OCI-LY7 (cell line): ENCODE measurements at regions of chr1 and their contacts with region 1.

Region 1: DNA sequence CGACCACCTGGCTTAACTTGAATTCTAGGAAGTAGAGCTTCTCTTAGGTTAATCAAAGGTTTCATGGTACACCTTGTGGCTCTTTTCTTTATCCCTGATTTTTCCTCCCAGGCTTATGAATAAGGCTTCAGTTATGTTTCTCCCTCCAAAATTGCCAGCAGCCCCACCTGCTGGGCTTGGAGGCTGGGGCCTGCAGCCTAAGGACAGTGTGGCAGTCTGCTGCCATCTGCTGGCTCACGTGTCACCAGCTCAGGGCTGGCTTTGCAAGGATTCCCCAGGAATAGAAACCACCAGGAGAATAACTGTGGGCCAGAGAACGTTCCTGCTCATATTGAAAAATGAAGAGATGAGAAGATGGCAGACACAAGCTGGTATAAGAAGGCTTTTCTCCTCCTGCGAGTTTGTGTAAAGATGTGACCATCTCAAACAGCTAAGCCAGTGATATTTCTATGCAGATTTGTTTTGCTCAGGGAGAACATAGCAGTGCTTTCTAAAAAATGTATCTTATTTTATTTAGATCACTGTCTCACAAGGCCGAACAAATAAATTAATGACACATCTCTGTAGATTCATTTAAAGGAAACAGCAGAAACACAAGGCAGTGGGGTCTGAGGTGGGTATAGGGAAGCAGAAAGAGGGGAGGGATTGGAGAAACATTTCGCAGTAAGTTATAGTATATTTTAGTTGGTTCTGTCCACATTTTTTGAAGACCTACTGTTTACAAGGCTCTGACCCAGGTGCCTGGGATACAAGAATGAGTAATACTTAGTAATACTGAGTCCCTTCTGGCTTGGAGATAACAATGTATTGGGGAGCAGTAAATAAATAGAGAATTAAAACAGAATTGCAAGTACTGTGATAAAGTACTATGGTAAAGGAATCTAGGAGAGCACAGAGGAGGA is 291.1 kb upstream of the SGIP1 start:
- DNase-seq: peak; percentile 86
- H3K4me3 ChIP-seq: no peak overlapping the region
- H3K27ac ChIP-seq: no peak overlapping the region
- H3K4me1 ChIP-seq: no peaks in the 10 kb centered on the region
- CTCF ChIP-seq: peak; percentile 100

Region 2: GRCh38 chr1:65958561-65959350 is 284.1 kb before region 1 on chr1:
- CTCF ChIA-PET with region 1: interaction called, 8 read pairs
- POLR2A ChIA-PET with region 1: interaction called, 5 read pairs
- intact Hi-C with region 1: loop called (anchors 1 kb)
- DNase-seq: peak; percentile 59
- H3K4me3 ChIP-seq: no peak overlapping the region
- H3K27ac ChIP-seq: no peak overlapping the region
- H3K4me1 ChIP-seq: no peaks in the 10 kb centered on the region
- CTCF ChIP-seq: peak; percentile 91

Region 3: GRCh38 chr1:66168948-66169671 is 73.8 kb before region 1 on chr1:
- CTCF ChIA-PET with region 1: no interaction called
- POLR2A ChIA-PET with region 1: interaction called, 5 read pairs
- intact Hi-C with region 1: loop called (anchors 2 kb)
- DNase-seq: peak; percentile 23
- H3K4me3 ChIP-seq: no peak overlapping the region
- H3K27ac ChIP-seq: peak overlapping the region; percentile 41
- H3K4me1 ChIP-seq: peaks cover 16% of the 10 kb centered on the region
- CTCF ChIP-seq: no peak

Region 4: DNA sequence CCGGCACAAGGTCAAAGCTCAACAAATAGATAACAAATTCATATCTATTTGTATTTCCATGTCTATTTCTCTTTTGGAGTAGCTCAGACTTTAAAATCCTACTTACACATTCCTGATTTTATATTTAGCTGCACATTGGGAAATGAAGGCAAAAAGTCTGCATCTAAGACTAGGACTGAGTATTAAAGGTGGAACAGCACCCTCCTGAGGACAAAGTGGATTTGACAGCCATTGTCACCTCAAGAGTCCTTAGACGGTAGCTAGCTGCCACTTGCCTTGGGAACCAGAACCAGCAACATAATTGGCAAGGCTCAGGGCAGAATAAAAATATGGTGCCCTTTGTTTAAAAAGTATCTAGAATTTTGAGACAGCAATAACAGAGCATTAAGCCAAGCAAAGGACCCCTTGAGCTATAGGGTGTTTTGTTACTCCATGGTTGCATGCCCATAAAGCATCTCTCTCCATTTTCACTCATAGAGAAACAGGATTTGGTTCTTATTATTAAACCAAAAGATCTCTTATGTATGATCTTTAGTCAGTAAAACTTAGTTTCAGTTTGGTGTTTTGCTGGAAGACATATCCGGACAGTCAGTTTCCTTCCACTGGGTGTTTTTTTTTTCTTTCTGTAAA is 261.1 kb after region 1 on chr1:
- CTCF ChIA-PET with region 1: no interaction called
- POLR2A ChIA-PET with region 1: interaction called, 3 read pairs
- intact Hi-C with region 1: loop called (anchors 5 kb)
- DNase-seq: peak; percentile 52
- H3K4me3 ChIP-seq: no peak overlapping the region
- H3K27ac ChIP-seq: no peak overlapping the region
- H3K4me1 ChIP-seq: no peaks in the 10 kb centered on the region
- CTCF ChIP-seq: peak; percentile 90